CD4-positive, alpha-beta T cell (primary cell): ENCODE measurements at regions of chr1 and their contacts with region 1.

Region 1: GRCh38 chr1:42924082-42924850 is 34.4 kb downstream of the SLC2A1 start:
- DNase-seq: peak; percentile 81 to 94 (median 88)
- ATAC-seq: peak; percentile 89
- H3K4me3 ChIP-seq: peak overlapping the region; percentile 81
- H3K4me3 Mint-ChIP-seq: peak overlapping the region; percentile 94
- H3K27ac ChIP-seq: peak overlapping the region; percentile 66 to 86
- H3K27ac Mint-ChIP-seq: peak overlapping the region; percentile 84
- H3K4me1 ChIP-seq: peaks cover 22% of the 10 kb centered on the region
- H3K4me1 Mint-ChIP-seq: peaks cover 40% of the 10 kb centered on the region
- H3K27me3 ChIP-seq: no peaks in the 10 kb centered on the region
- H3K27me3 Mint-ChIP-seq: no peaks in the 10 kb centered on the region
- CTCF ChIP-seq: no peak

Region 2: GRCh38 chr1:42936309-42937078 is 12.2 kb after region 1 on chr1:
- CTCF ChIA-PET with region 1: interaction called, 11 read pairs
- POLR2A ChIA-PET with region 1: interaction called, 15 read pairs
- intact Hi-C with region 1: no loop called
- DNase-seq: peak in 7 of 14 experiments; percentile 22 to 67 (median 55)
- ATAC-seq: peak; percentile 13
- H3K4me3 ChIP-seq: no peak overlapping the region
- H3K4me3 Mint-ChIP-seq: peak overlapping the region; percentile 64
- H3K27ac ChIP-seq: peak overlapping the region; percentile 69 to 75
- H3K27ac Mint-ChIP-seq: peak overlapping the region; percentile 91
- H3K4me1 ChIP-seq: peaks cover 100% of the 10 kb centered on the region
- H3K4me1 Mint-ChIP-seq: peaks cover 93% of the 10 kb centered on the region
- H3K27me3 ChIP-seq: no peaks in the 10 kb centered on the region
- H3K27me3 Mint-ChIP-seq: no peaks in the 10 kb centered on the region
- CTCF ChIP-seq: no peak

Region 3: GRCh38 chr1:42941640-42942330 is 17.5 kb after region 1 on chr1:
- CTCF ChIA-PET with region 1: interaction called, 11 read pairs
- POLR2A ChIA-PET with region 1: interaction called, 4 read pairs
- intact Hi-C with region 1: no loop called
- DNase-seq: peak in 3 of 14 experiments; percentile 39 to 57 (median 45)
- ATAC-seq: no peak
- H3K4me3 ChIP-seq: no peak overlapping the region
- H3K4me3 Mint-ChIP-seq: no peak overlapping the region
- H3K27ac ChIP-seq: peak overlapping the region in 1 of 2 donors; percentile 42
- H3K27ac Mint-ChIP-seq: peak overlapping the region; percentile 80
- H3K4me1 ChIP-seq: peaks cover 100% of the 10 kb centered on the region
- H3K4me1 Mint-ChIP-seq: peaks cover 93% of the 10 kb centered on the region
- H3K27me3 ChIP-seq: no peaks in the 10 kb centered on the region
- H3K27me3 Mint-ChIP-seq: no peaks in the 10 kb centered on the region
- CTCF ChIP-seq: no peak

Region 4: DNA sequence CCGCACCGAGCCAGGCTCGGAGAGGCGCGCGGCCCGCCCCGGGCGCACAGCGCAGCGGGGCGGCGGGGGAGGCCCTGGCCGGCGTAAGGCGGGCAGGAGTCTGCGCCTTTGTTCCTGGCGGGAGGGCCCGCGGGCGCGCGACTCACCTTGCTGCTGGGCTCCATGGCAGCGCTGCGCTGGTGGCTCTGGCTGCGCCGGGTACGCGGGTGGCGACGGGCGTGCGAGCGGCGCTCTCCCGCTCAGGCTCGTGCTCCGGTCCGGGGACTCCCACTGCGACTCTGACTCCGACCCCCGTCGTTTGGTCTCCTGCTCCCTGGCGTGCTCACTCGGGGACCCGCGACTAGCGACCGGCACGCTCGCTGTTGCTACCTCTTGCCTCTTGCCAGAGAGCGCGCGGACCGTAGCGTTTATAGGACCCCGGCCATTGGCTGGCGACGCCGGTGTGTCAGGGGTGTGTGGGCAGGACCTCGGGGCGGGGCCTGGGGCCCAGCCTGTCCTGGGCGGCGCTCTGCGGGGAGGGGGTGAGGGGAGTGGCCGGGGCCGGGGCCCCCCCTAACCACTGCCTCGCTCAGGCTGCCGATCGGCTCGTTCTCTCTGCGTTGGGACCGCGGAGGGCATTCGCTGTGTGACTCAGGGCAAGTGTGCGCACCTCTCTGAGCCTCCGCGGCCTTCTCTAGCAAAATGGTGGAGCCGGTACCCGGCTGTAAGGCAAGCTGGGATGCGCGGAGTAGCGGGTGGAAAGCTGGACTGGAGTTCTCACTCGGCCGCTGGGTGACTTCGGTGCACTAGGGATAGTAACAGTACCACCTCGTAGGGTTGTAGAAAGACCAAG is 34.4 kb after region 1 on chr1 and contains the start of gene SLC2A1:
- CTCF ChIA-PET with region 1: interaction called, 24 read pairs
- POLR2A ChIA-PET with region 1: interaction called, 64 read pairs
- intact Hi-C with region 1: loop called (anchors 1 to 5 kb)
- DNase-seq: peak; percentile 89 to 98 (median 94)
- ATAC-seq: peak; percentile 90
- H3K4me3 ChIP-seq: peak within 1 kb of the TSS; percentile 89
- H3K4me3 Mint-ChIP-seq: peak within 1 kb of the TSS; percentile 100
- H3K27ac ChIP-seq: peak within 1 kb of the TSS; percentile 73 to 76
- H3K27ac Mint-ChIP-seq: peak within 1 kb of the TSS; percentile 96
- H3K4me1 ChIP-seq: peaks cover 54% of the 10 kb centered on the region
- H3K4me1 Mint-ChIP-seq: peaks cover 60% of the 10 kb centered on the region
- H3K27me3 ChIP-seq: no peaks in the 10 kb centered on the region
- H3K27me3 Mint-ChIP-seq: no peaks in the 10 kb centered on the region
- CTCF ChIP-seq: no peak
- total RNA-seq, gene SLC2A1: 78.6 to 80.9 TPM

Region 5: DNA sequence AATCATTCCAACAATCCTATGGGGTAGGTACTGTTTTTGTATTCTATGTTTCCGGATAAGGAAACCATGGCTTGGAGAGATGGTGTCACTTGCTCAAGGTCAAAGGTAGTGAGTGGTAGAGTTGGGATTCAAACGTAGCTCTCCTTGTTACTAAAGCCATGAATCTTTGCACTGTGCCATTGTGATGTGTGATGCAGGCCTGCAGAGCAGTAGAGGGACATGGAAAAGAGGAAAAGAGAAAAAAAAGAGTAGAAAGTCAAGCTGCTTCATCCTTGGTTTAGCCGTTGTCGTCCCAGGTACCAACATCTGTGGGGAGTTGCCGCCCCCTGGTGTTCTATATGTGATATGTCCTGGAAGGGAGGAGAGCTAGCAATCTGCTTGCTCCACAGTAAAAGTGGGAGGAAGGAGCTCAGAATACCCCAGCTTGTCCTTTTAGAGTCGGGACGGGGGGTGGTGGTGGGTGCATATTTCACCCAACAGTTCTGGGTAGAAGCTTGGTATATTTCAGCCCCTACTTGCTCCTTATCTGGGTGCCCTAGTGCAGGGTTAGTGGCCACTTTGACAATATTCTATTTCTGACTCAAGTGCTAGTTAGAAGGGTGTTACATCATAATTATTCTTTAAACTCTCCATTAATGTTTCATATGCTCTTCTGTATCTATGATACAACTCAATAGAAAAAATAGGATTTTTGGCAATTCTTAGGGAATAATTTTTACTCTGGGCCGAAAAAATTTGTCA is 149.4 kb after region 1 on chr1:
- CTCF ChIA-PET with region 1: interaction called, 74 read pairs
- POLR2A ChIA-PET with region 1: interaction called, 51 read pairs
- intact Hi-C with region 1: loop called in 1 of 2 experiments (anchors 2 kb)
- DNase-seq: peak; percentile 60 to 87 (median 68)
- ATAC-seq: peak; percentile 84
- H3K4me3 ChIP-seq: no peak overlapping the region
- H3K4me3 Mint-ChIP-seq: no peak overlapping the region
- H3K27ac ChIP-seq: no peak overlapping the region
- H3K27ac Mint-ChIP-seq: no peak overlapping the region
- H3K4me1 ChIP-seq: peaks cover 6% of the 10 kb centered on the region
- H3K4me1 Mint-ChIP-seq: peaks cover 15% of the 10 kb centered on the region
- H3K27me3 ChIP-seq: no peaks in the 10 kb centered on the region
- H3K27me3 Mint-ChIP-seq: no peaks in the 10 kb centered on the region
- CTCF ChIP-seq: peak; percentile 82